SK-N-SH (cell line): ENCODE measurements at regions of chr5 and their contacts with region 1.

Region 1: GRCh38 chr5:88729084-88729828 is 153.7 kb downstream of the MEF2C start:
- DNase-seq: peak; percentile 29
- H3K4me3 ChIP-seq: no peak overlapping the region; a peak in 1 of 4 replicates
- H3K27ac ChIP-seq: no peak overlapping the region
- H3K4me1 ChIP-seq: peaks cover 0 to 8% of the 10 kb centered on the region in 2 experiments; a peak in 2 of 4 replicates
- H3K27me3 ChIP-seq: no peaks in the 10 kb centered on the region
- CTCF ChIP-seq: peak; percentile 90
- EP300 ChIP-seq: no peak
- RAD21 ChIP-seq: peak; percentile 94

Region 2: GRCh38 chr5:88374391-88374790 is 354.9 kb before region 1 on chr5:
- CTCF ChIA-PET with region 1: no interaction called
- POLR2A ChIA-PET with region 1: no interaction called
- DNase-seq: no peak
- H3K4me3 ChIP-seq: no peak overlapping the region
- H3K27ac ChIP-seq: no peak overlapping the region
- H3K4me1 ChIP-seq: no peaks in the 10 kb centered on the region
- H3K27me3 ChIP-seq: no peaks in the 10 kb centered on the region
- CTCF ChIP-seq: no peak
- EP300 ChIP-seq: no peak
- RAD21 ChIP-seq: no peak

Region 3: GRCh38 chr5:89729623-89730301 is 1000.5 kb after region 1 on chr5:
- CTCF ChIA-PET with region 1: interaction called, 32 read pairs
- POLR2A ChIA-PET with region 1: no interaction called
- DNase-seq: no peak
- H3K4me3 ChIP-seq: no peak overlapping the region
- H3K27ac ChIP-seq: no peak overlapping the region
- H3K4me1 ChIP-seq: no peaks in the 10 kb centered on the region
- H3K27me3 ChIP-seq: no peaks in the 10 kb centered on the region
- CTCF ChIP-seq: peak; percentile 35; the same call in 1 of the 2 replicates
- EP300 ChIP-seq: no peak
- RAD21 ChIP-seq: peak; percentile 67

Region 4: GRCh38 chr5:90264689-90265544 is 1535.7 kb after region 1 on chr5:
- CTCF ChIA-PET with region 1: interaction called, 168 read pairs
- POLR2A ChIA-PET with region 1: no interaction called
- DNase-seq: peak; percentile 31
- H3K4me3 ChIP-seq: peak overlapping the region in 1 of 2 experiments; percentile 28; a peak in 1 of 4 replicates
- H3K27ac ChIP-seq: peak overlapping the region in 1 of 2 experiments; percentile 51; a peak in 1 of 4 replicates
- H3K4me1 ChIP-seq: peaks cover 0 to 2% of the 10 kb centered on the region in 2 experiments; a peak in 2 of 4 replicates
- H3K27me3 ChIP-seq: no peaks in the 10 kb centered on the region
- CTCF ChIP-seq: peak; percentile 98
- EP300 ChIP-seq: peak in 1 of 2 experiments; percentile 59; a peak in 2 of 4 replicates
- RAD21 ChIP-seq: peak; percentile 99

Region 5: DNA sequence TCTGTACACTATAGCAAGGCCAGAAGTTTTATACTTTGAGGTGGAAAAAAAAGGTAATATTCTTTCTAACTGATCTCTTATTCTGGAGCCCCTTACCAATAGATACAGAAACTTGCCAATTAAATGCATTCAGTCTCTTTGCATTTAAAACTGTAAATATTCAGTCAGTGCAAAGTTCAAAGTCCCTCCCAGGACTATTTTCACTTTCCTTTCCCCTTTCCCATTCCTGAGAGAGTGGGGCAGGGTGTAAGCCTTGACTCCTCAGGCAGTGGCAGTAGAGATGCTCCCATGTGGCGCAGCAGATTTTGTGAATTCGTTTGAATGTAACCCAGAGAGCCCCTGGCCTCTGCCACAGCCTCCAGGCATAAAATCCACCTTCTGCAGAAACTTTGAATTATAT is 1650.4 kb after region 1 on chr5:
- CTCF ChIA-PET with region 1: interaction called, 150 read pairs
- POLR2A ChIA-PET with region 1: no interaction called
- DNase-seq: no peak
- H3K4me3 ChIP-seq: no peak overlapping the region
- H3K27ac ChIP-seq: no peak overlapping the region
- H3K4me1 ChIP-seq: no peaks in the 10 kb centered on the region; a peak in 1 of 4 replicates
- H3K27me3 ChIP-seq: no peaks in the 10 kb centered on the region; the same call in 1 of the 2 replicates
- CTCF ChIP-seq: no peak
- EP300 ChIP-seq: no peak
- RAD21 ChIP-seq: no peak

Region 6: DNA sequence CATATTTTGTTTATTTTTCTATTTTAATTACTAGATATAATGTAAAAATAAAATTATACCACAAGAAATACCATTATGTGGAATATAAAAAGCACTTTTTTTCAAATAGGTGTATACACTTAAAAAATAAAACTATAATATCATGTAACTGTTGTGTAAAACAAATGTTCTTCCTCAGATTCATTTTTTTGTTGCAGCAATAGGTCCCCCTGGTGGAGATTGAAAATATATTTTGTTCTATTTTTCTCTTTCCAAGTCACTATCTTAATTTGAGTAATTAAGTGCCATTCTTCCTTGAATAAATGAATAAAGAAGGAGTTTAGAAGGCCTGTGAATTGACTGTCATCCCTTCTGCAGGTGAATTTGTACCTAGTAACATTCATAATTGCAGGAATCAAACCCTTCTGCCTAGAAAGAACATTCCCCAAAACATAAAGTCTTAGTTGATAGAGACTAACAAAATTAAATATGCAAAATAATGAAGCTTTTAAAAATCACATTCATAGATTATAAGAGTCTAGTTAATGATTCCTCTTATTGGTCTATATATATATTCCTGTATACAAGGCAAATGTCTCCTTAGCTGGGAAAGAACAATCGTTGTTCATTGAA is 1656.9 kb after region 1 on chr5:
- CTCF ChIA-PET with region 1: interaction called, 150 read pairs
- POLR2A ChIA-PET with region 1: no interaction called
- DNase-seq: peak; percentile 5
- H3K4me3 ChIP-seq: no peak overlapping the region
- H3K27ac ChIP-seq: no peak overlapping the region
- H3K4me1 ChIP-seq: no peaks in the 10 kb centered on the region
- H3K27me3 ChIP-seq: no peaks in the 10 kb centered on the region; the same call in 1 of the 2 replicates
- CTCF ChIP-seq: peak; percentile 66
- EP300 ChIP-seq: no peak
- RAD21 ChIP-seq: peak; percentile 77

Region 7: GRCh38 chr5:90409318-90410177 is 1680.3 kb after region 1 on chr5 and contains the start of gene CETN3:
- CTCF ChIA-PET with region 1: interaction called, 14 read pairs
- POLR2A ChIA-PET with region 1: no interaction called
- DNase-seq: peak; percentile 85
- H3K4me3 ChIP-seq: peak within 1 kb of the TSS; percentile 87 to 99
- H3K27ac ChIP-seq: peak within 1 kb of the TSS; percentile 95 to 99
- H3K4me1 ChIP-seq: peaks cover 3 to 20% of the 10 kb centered on the region in 2 experiments; a peak in 2 of 4 replicates
- H3K27me3 ChIP-seq: no peaks in the 10 kb centered on the region
- CTCF ChIP-seq: no peak
- EP300 ChIP-seq: peak in 1 of 2 experiments; percentile 11; a peak in 1 of 4 replicates
- RAD21 ChIP-seq: no peak
- polyA plus RNA-seq, gene CETN3: 3.6 and 4.6 TPM in 2 replicates